CD8-positive, alpha-beta T cell (primary cell): ENCODE measurements at regions of chr11 and their contacts with region 1.

Region 1: DNA sequence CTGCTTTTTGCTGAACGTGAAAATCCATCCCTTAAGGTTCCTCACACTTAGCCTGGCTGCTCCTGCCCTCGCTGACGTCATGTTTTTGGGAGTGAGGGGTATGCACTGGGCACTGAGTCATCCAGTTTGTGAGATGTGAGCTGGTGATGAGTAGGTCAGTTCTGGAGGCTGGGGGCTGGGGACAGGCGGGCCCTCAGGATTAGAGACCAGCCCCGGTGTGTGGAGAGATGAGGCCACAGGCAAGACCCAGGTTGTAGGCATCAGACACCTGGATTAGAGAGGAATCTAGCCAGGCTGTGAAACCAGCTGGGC is 9.2 kb downstream of the KCNC1 start:
- DNase-seq: no peak
- ATAC-seq: no peak
- H3K4me3 ChIP-seq: no peak overlapping the region
- H3K4me3 Mint-ChIP-seq: no peak overlapping the region
- H3K27ac ChIP-seq: no peak overlapping the region
- H3K27ac Mint-ChIP-seq: no peak overlapping the region
- H3K4me1 ChIP-seq: no peaks in the 10 kb centered on the region
- H3K4me1 Mint-ChIP-seq: no peaks in the 10 kb centered on the region
- H3K27me3 ChIP-seq: peaks cover 0 to under 1% of the 10 kb centered on the region in 2 experiments
- H3K27me3 Mint-ChIP-seq: peaks cover 31% of the 10 kb centered on the region
- CTCF ChIP-seq: no peak

Region 2: DNA sequence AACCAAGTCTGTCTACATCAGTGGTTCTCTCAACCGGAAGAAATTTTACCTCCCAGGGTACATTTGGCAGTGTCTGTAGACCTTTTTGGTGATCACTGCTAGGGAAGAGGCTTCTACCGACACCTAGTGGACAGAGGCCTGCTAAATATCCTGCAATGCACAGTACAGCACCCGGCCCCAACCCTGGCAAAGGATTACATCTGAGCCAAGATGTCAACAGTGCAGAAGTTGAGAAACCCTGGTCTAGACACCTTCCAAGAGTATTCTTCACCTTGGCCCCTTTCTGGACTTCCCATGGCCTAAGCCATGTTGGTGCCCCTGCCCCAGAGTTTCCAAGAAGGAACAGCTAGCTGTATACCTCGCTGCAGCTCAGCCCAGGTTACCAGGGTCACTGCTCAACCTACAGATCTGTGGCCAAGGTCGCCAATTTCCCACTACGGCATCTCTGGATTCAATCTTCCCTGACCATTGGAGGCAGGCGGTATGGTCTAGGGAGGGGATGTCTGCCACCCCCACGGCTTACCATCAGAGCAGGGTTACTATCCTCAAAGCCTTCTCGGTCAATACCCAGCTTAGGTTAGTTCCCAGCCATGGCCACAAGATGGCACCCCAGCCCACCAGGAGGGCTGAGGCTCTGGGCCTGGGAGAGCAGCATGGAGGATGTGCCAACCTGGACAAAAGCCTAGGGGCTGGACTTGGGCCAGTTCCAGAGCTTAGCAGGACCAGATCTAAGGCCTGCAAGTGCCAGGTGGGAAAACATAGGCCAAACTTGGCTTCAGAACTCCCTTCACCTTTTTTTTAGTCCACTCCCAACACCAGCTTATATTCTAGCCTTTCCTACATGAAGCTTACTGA is 12.9 kb before region 1 on chr11:
- CTCF ChIA-PET with region 1: interaction called, 21 read pairs
- POLR2A ChIA-PET with region 1: no interaction called
- intact Hi-C with region 1: no loop called
- DNase-seq: peak in 8 of 9 experiments; percentile 25 to 63 (median 46)
- ATAC-seq: peak; percentile 51
- H3K4me3 ChIP-seq: no peak overlapping the region
- H3K4me3 Mint-ChIP-seq: no peak overlapping the region
- H3K27ac ChIP-seq: no peak overlapping the region
- H3K27ac Mint-ChIP-seq: no peak overlapping the region
- H3K4me1 ChIP-seq: no peaks in the 10 kb centered on the region
- H3K4me1 Mint-ChIP-seq: peaks cover 5% of the 10 kb centered on the region
- H3K27me3 ChIP-seq: peaks cover 3% of the 10 kb centered on the region in 2 experiments
- H3K27me3 Mint-ChIP-seq: peaks cover 43% of the 10 kb centered on the region
- CTCF ChIP-seq: peak; percentile 51